A549 (cell line): ENCODE measurements at regions of chr17 and their contacts with region 1.

Region 1: DNA sequence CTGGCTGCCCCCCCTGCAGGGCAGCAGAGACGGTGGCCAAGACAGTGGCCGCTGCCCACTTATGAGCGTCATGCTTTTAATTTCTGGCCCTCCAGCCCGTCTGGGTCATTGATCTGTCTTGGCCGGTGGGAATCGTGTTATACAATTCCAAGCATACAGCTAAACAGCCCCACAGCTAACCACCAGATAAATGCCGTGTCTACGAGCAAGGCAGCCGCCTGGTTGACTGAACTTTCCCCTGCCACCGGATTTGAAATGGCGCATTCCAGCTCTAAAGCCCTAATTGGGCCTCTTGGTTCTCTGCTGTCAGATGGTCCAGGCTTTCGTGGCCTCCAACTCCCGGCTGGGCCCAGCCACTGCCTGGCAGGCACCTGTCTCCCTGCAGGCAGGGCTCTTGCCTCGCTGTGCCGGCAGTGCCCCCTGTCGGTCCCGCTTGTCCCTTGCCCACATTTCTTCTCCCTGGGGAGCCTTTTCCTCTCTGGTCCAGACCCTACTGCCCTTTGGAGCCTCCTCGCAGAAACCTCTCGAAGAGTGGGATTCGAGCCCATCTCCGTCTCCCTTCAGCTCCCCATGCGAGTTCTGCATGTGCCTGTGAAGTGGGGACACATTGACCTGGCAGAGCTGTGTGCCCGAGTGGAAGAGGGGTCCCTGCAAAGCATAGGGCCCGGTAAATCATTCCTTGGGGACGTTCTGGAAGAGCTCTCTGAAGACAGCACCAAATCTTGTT is 1.8 kb upstream of the RBFOX3 start:
- DNase-seq: peak; percentile 92 to 94
- ATAC-seq: peak; percentile 67 to 89
- H3K4me3 ChIP-seq: no peak overlapping the region
- H3K27ac ChIP-seq: peak overlapping the region; percentile 88 to 95
- H3K4me1 ChIP-seq: peaks cover 37% of the 10 kb centered on the region
- CTCF ChIP-seq: peak; percentile 97
- EP300 ChIP-seq: no peak
- POLR2A ChIP-seq: no peak
- RAD21 ChIP-seq: peak; percentile 96 to 97

Region 2: DNA sequence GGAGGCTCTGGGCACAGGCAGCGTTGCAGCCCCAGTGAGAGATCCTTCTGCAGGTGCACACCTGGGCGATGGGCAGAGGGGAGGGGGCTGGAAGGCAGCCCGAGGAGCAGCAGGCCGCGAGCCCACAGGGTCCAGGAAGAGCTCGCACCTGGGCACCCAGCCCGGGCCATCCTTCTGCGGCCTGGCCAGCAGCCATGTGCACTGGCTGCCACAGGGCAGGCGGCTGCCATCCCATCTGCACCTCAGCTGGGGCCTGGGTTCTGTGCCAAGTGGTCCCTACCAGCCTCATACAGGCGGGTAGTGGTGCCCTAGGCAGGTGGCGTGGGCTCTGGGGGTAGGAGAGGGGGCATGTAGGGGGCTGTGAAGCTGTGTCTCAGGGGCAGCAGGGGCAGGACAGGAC is 199.0 kb before region 1 on chr17:
- CTCF ChIA-PET with region 1: interaction called, 12 read pairs
- POLR2A ChIA-PET with region 1: no interaction called
- DNase-seq: no peak
- ATAC-seq: no peak
- H3K4me3 ChIP-seq: no peak overlapping the region
- H3K27ac ChIP-seq: peak overlapping the region in 1 of 2 experiments; percentile 36; a peak in 2 of 6 replicates
- H3K4me1 ChIP-seq: no peaks in the 10 kb centered on the region
- CTCF ChIP-seq: no peak
- EP300 ChIP-seq: no peak
- POLR2A ChIP-seq: no peak
- RAD21 ChIP-seq: no peak

Region 3: GRCh38 chr17:79465011-79465680 is 147.5 kb before region 1 on chr17:
- CTCF ChIA-PET with region 1: interaction called, 11 read pairs
- POLR2A ChIA-PET with region 1: no interaction called
- DNase-seq: no peak
- ATAC-seq: no peak
- H3K4me3 ChIP-seq: no peak overlapping the region
- H3K27ac ChIP-seq: peak overlapping the region; percentile 45 to 72; a peak in 4 of 6 replicates
- H3K4me1 ChIP-seq: peaks cover 20% of the 10 kb centered on the region
- CTCF ChIP-seq: no peak
- EP300 ChIP-seq: no peak
- POLR2A ChIP-seq: no peak
- RAD21 ChIP-seq: no peak

Region 4: GRCh38 chr17:79520167-79521165 is 92.2 kb before region 1 on chr17:
- CTCF ChIA-PET with region 1: interaction called, 10 read pairs
- POLR2A ChIA-PET with region 1: no interaction called
- DNase-seq: no peak
- ATAC-seq: no peak
- H3K4me3 ChIP-seq: no peak overlapping the region
- H3K27ac ChIP-seq: no peak overlapping the region; a peak in 1 of 6 replicates
- H3K4me1 ChIP-seq: peaks cover 35% of the 10 kb centered on the region
- CTCF ChIP-seq: no peak
- EP300 ChIP-seq: no peak
- POLR2A ChIP-seq: no peak
- RAD21 ChIP-seq: no peak

Region 5: GRCh38 chr17:79577485-79578187 is 35.0 kb before region 1 on chr17:
- CTCF ChIA-PET with region 1: interaction called, 11 read pairs
- POLR2A ChIA-PET with region 1: no interaction called
- DNase-seq: no peak
- ATAC-seq: no peak
- H3K4me3 ChIP-seq: no peak overlapping the region
- H3K27ac ChIP-seq: no peak overlapping the region
- H3K4me1 ChIP-seq: peaks cover 31% of the 10 kb centered on the region
- CTCF ChIP-seq: no peak
- EP300 ChIP-seq: no peak
- POLR2A ChIP-seq: no peak
- RAD21 ChIP-seq: no peak

Region 6: DNA sequence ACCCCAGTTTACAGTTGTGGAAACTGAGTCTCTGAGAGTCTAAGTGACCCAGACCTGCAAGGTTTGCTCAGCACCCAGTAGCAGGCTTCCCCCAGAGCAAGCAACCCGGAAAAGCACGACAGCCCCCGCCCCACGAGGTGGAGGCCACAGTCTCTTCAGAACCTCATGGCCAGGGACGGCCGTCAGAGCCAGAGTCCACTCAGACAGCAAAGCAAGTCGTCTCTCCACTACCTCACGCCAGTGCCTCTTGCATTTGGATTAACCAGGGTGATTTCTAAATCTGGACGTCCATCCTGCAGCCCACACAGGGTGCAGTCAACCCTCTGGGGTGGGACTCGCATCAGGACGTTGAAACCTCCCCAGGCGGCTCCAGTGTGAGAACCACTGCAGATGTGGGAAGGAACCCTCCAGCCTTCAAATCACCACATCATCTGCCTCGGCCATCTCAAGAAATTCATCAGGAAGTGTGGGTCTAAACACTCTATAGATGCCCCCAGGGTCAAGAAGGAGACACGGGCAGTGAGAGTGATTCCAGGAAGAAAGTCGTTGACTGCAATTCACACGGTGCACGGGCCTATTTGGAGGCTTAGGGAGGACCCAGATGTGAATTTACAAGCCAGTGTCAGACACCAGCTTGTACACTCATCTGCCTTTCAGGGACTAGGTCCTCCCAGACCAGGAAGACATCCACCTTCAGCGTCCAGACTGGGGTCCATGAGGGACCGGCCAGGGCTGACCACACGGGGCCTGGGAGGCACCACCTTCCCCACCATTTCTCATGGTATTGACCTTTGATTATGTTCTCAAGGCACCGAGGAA is 18.4 kb after region 1 on chr17:
- CTCF ChIA-PET with region 1: interaction called, 19 read pairs
- POLR2A ChIA-PET with region 1: no interaction called
- DNase-seq: no peak
- ATAC-seq: no peak
- H3K4me3 ChIP-seq: no peak overlapping the region
- H3K27ac ChIP-seq: peak overlapping the region; percentile 61 to 78
- H3K4me1 ChIP-seq: peaks cover 39% of the 10 kb centered on the region
- CTCF ChIP-seq: no peak
- EP300 ChIP-seq: no peak
- POLR2A ChIP-seq: no peak
- RAD21 ChIP-seq: no peak

Region 7: GRCh38 chr17:79707931-79708891 is 95.6 kb after region 1 on chr17:
- CTCF ChIA-PET with region 1: interaction called, 11 read pairs
- POLR2A ChIA-PET with region 1: no interaction called
- DNase-seq: peak; percentile 66 to 71
- ATAC-seq: peak; percentile 58 to 80
- H3K4me3 ChIP-seq: no peak overlapping the region
- H3K27ac ChIP-seq: peak overlapping the region; percentile 63 to 77; a peak in 5 of 6 replicates
- H3K4me1 ChIP-seq: peaks cover 17% of the 10 kb centered on the region
- CTCF ChIP-seq: peak; percentile 96
- EP300 ChIP-seq: no peak
- POLR2A ChIP-seq: no peak
- RAD21 ChIP-seq: peak; percentile 96 to 97